B cell (primary cell): ENCODE measurements at regions of chr2 and their contacts with region 1.

Region 1: GRCh38 chr2:164737612-164738081 is 104.0 kb downstream of the COBLL1 start:
- DNase-seq: peak; percentile 86
- ATAC-seq: peak; percentile 68
- H3K4me3 ChIP-seq: peak overlapping the region in 1 of 5 experiments; percentile 1
- H3K4me3 Mint-ChIP-seq: peak overlapping the region; percentile 16
- H3K27ac ChIP-seq: no peak overlapping the region
- H3K27ac Mint-ChIP-seq: peak overlapping the region; percentile 16
- H3K4me1 ChIP-seq: peaks cover 24 to 40% of the 10 kb centered on the region in 2 donors
- H3K4me1 Mint-ChIP-seq: peaks cover 63% of the 10 kb centered on the region
- H3K27me3 ChIP-seq: no peaks in the 10 kb centered on the region
- H3K27me3 Mint-ChIP-seq: no peaks in the 10 kb centered on the region
- CTCF ChIP-seq: peak; percentile 91

Region 2: GRCh38 chr2:164754157-164755093 is 16.8 kb after region 1 on chr2:
- CTCF ChIA-PET with region 1: interaction called, 12 read pairs
- POLR2A ChIA-PET with region 1: no interaction called
- intact Hi-C with region 1: no loop called
- DNase-seq: peak; percentile 71
- ATAC-seq: peak; percentile 70
- H3K4me3 ChIP-seq: peak overlapping the region in 3 of 5 experiments; percentile 6 to 59 (median 30)
- H3K4me3 Mint-ChIP-seq: peak overlapping the region; percentile 66
- H3K27ac ChIP-seq: peak overlapping the region; percentile 57 to 62
- H3K27ac Mint-ChIP-seq: peak overlapping the region; percentile 80
- H3K4me1 ChIP-seq: peaks cover 39 to 52% of the 10 kb centered on the region in 2 donors
- H3K4me1 Mint-ChIP-seq: peaks cover 66% of the 10 kb centered on the region
- H3K27me3 ChIP-seq: no peaks in the 10 kb centered on the region
- H3K27me3 Mint-ChIP-seq: no peaks in the 10 kb centered on the region
- CTCF ChIP-seq: no peak

Region 3: GRCh38 chr2:164778723-164779122 is 41.1 kb after region 1 on chr2:
- CTCF ChIA-PET with region 1: interaction called, 3 read pairs
- POLR2A ChIA-PET with region 1: no interaction called
- intact Hi-C with region 1: loop called (anchors 5 kb)
- DNase-seq: no peak
- ATAC-seq: no peak
- H3K4me3 ChIP-seq: no peak overlapping the region
- H3K4me3 Mint-ChIP-seq: no peak overlapping the region
- H3K27ac ChIP-seq: no peak overlapping the region
- H3K27ac Mint-ChIP-seq: no peak overlapping the region
- H3K4me1 ChIP-seq: no peaks in the 10 kb centered on the region
- H3K4me1 Mint-ChIP-seq: peaks cover 10% of the 10 kb centered on the region
- H3K27me3 ChIP-seq: no peaks in the 10 kb centered on the region
- H3K27me3 Mint-ChIP-seq: no peaks in the 10 kb centered on the region
- CTCF ChIP-seq: no peak

Region 4: DNA sequence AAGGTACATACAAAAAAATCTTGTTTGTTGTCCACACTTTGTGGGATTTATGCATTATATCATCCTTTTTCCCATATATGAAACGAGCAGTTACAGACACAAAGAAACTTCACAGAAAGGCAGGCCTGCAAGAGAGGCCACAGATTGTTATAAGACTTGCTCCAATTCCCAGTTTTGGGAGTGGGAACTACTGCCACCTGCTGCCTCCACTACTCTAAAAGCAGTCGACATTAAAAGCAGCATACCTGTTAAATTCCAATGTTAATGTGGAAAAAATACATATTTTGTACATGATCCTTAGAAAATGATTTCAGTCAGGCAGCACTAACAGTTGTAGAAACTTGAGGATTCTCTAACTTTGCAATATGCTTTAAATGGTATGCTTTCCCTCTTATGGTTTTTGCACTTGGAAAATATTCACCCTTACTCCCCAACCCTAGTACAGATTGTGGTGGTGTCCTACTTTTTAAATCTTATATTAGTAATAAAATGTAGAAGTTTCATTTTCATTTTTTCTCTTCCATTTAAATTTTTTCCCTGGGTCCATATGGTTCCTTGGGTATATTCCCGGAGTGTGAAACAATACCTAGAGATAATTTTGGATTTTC is 179.8 kb after region 1 on chr2:
- CTCF ChIA-PET with region 1: interaction called, 102 read pairs
- POLR2A ChIA-PET with region 1: no interaction called
- intact Hi-C with region 1: loop called (anchors 1 kb)
- DNase-seq: no peak
- ATAC-seq: no peak
- H3K4me3 ChIP-seq: no peak overlapping the region
- H3K4me3 Mint-ChIP-seq: no peak overlapping the region
- H3K27ac ChIP-seq: no peak overlapping the region
- H3K27ac Mint-ChIP-seq: no peak overlapping the region
- H3K4me1 ChIP-seq: peaks cover 14% of the 10 kb centered on the region in 2 donors
- H3K4me1 Mint-ChIP-seq: peaks cover 21% of the 10 kb centered on the region
- H3K27me3 ChIP-seq: no peaks in the 10 kb centered on the region
- H3K27me3 Mint-ChIP-seq: no peaks in the 10 kb centered on the region
- CTCF ChIP-seq: no peak

Region 5: GRCh38 chr2:165015052-165015642 is 277.5 kb after region 1 on chr2:
- CTCF ChIA-PET with region 1: interaction called, 9 read pairs
- POLR2A ChIA-PET with region 1: no interaction called
- intact Hi-C with region 1: loop called (anchors 1 kb)
- DNase-seq: peak; percentile 70
- ATAC-seq: peak; percentile 44
- H3K4me3 ChIP-seq: no peak overlapping the region
- H3K4me3 Mint-ChIP-seq: no peak overlapping the region
- H3K27ac ChIP-seq: no peak overlapping the region
- H3K27ac Mint-ChIP-seq: peak overlapping the region; percentile 73
- H3K4me1 ChIP-seq: peaks cover 38 to 43% of the 10 kb centered on the region in 2 donors
- H3K4me1 Mint-ChIP-seq: peaks cover 10% of the 10 kb centered on the region
- H3K27me3 ChIP-seq: no peaks in the 10 kb centered on the region
- H3K27me3 Mint-ChIP-seq: peaks cover under 1% of the 10 kb centered on the region
- CTCF ChIP-seq: peak; percentile 84

Region 6: DNA sequence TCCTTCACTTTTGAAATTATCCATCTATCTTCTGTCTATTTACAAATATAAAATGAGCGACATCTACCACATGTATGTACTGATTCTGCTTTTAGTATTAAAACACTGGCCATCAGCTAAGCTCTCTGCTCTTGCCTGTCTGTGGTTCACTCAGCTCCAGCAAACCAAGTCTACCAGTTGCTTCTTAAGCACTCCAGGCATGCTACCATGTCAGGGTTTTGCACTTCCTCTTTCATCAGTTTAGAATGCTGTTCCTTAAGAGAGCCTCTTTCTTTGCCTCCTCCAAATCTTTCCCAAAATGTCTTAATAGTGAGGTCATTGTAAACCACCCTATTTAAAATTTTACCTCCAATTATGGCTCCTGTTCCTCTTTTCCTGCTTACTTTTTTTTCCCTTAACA is 406.7 kb after region 1 on chr2:
- CTCF ChIA-PET with region 1: no interaction called
- POLR2A ChIA-PET with region 1: no interaction called
- intact Hi-C with region 1: no loop called
- DNase-seq: peak; percentile 39
- ATAC-seq: peak; percentile 56
- H3K4me3 ChIP-seq: no peak overlapping the region
- H3K4me3 Mint-ChIP-seq: no peak overlapping the region
- H3K27ac ChIP-seq: no peak overlapping the region
- H3K27ac Mint-ChIP-seq: no peak overlapping the region
- H3K4me1 ChIP-seq: peaks cover 0 to 7% of the 10 kb centered on the region in 2 donors
- H3K4me1 Mint-ChIP-seq: peaks cover 17% of the 10 kb centered on the region
- H3K27me3 ChIP-seq: no peaks in the 10 kb centered on the region
- H3K27me3 Mint-ChIP-seq: no peaks in the 10 kb centered on the region
- CTCF ChIP-seq: no peak